OCI-LY7 (cell line): ENCODE measurements at regions of chr5 and their contacts with region 1.

Region 1: GRCh38 chr5:171433982-171434676 is 14.7 kb downstream of the FGF18 start:
- DNase-seq: no peak
- H3K4me3 ChIP-seq: no peak overlapping the region
- H3K27ac ChIP-seq: no peak overlapping the region
- H3K4me1 ChIP-seq: no peaks in the 10 kb centered on the region
- CTCF ChIP-seq: no peak

Region 2: DNA sequence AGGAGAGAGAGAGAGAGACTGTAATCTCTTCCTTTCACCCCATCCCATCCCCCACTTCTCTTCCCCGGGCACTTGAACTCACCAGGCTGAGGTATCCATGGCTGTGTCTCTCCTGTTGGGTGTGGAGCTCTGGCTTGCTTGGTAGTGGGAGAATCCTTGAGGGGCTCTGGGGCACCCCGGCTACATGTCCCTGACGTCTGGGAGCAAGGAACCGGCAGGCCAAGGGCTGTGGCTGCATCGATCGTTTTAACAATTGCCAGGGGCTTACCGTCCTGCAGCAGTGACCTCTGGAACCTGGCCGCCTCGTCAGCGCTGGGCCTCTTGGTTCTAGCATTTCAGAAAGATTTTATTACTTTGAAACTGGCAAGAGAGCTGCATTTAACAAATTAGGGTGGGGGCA is 15.3 kb after region 1 on chr5:
- CTCF ChIA-PET with region 1: interaction called, 15 read pairs
- POLR2A ChIA-PET with region 1: no interaction called
- intact Hi-C with region 1: no loop called
- DNase-seq: no peak
- H3K4me3 ChIP-seq: no peak overlapping the region
- H3K27ac ChIP-seq: no peak overlapping the region
- H3K4me1 ChIP-seq: no peaks in the 10 kb centered on the region
- CTCF ChIP-seq: no peak